PC-9 (cell line): ENCODE measurements at regions of chr2 and their contacts with region 1.

Region 1: DNA sequence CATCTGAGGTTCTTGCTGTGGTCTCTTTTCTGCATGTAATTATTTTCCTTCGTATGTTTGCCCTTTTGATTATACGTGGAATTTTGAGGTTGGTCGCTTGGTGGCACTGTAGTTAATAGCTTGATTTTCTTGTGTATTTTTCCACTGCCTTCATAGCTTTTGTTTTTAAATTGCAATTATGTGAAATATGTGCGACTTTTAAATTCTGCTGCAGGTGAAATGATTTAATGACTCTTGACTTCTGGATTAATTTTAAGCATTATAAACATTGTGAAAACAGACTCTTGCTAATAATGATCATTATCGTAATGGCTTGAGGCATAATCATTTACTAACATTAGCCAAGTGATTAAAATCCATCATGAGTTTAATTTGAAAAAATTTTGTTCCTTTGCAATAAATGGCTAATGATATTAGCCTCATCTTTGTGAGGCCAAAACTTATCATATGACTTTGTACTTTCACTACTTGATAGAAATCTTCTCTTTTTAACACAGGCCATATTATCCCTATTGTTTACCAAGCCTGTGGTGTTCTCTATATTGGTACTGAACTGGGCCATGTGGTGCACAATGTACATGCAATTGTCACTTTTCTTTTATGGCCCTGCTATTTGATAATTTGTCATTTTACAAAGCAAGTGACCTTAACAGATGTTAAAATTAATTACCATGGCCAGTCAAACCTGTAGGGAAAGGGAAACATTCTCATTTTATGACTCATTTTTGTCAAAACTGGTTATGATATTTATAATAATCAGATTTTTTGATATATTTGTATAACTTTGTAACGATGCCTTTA is 62.8 kb upstream of the NEUROD1 start:
- DNase-seq: peak; percentile 50 to 59
- H3K4me3 ChIP-seq: no peak overlapping the region
- H3K27ac ChIP-seq: no peak overlapping the region
- H3K4me1 ChIP-seq: peaks cover 14% of the 10 kb centered on the region
- H3K27me3 ChIP-seq: no peaks in the 10 kb centered on the region
- CTCF ChIP-seq: peak; percentile 95

Region 2: DNA sequence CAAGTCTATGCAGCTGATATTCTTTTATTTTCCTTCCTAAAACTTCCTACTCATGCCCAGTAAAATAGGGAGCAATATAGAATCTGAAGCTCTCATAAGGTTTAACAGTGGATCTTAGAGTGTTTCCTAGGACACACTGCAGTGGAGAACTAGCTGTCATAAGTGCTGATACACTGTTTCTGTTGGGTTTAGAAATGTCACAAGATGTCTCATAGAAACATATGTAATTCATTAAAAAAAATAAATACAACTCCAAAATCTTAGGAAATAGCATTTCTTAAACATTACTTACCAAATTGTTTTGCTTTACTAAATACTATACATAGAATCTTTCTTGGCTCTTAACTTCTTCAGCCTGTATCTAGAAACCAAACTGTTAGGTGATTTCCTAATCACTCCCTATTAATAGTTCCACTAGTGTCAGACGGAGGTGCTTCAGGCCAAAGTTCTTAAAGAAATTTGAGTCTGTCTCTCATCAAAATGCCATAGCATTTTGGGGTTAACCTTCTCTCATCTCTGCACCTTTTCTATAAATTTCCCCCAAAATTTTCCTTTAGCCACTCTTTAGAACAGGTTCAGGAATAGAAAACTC is 179.9 kb before region 1 on chr2:
- CTCF ChIA-PET with region 1: no interaction called
- POLR2A ChIA-PET with region 1: no interaction called
- intact Hi-C with region 1: no loop called
- DNase-seq: no peak
- H3K4me3 ChIP-seq: no peak overlapping the region
- H3K27ac ChIP-seq: no peak overlapping the region
- H3K4me1 ChIP-seq: no peaks in the 10 kb centered on the region
- H3K27me3 ChIP-seq: no peaks in the 10 kb centered on the region
- CTCF ChIP-seq: no peak

Region 3: GRCh38 chr2:181810823-181811695 is 67.9 kb after region 1 on chr2:
- CTCF ChIA-PET with region 1: interaction called, 7 read pairs
- POLR2A ChIA-PET with region 1: no interaction called
- intact Hi-C with region 1: loop called (anchors 2 kb)
- DNase-seq: peak; percentile 81 to 98
- H3K4me3 ChIP-seq: no peak overlapping the region
- H3K27ac ChIP-seq: peak overlapping the region; percentile 74
- H3K4me1 ChIP-seq: peaks cover 32% of the 10 kb centered on the region
- H3K27me3 ChIP-seq: no peaks in the 10 kb centered on the region
- CTCF ChIP-seq: no peak

Region 4: DNA sequence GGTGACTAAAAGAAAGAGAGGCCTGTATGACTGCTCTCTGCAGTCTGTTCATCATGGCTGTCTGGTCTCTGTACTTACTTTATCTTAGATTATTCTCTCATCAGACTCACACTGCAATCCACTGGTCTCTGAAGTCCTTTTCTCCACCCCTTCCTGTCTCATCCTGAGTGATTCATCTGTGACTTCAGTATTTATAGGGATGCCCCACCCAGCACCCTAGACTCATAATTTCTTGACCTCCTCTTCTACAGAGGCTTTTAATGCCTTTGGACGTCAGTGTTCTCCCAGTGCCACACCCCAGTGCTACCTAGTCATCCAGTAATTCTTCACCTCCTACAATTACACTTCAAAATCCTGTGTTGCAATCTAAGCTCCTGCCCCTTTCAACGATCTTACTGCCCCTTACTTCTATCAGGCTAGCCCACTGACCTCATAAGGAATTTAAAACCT is 133.5 kb after region 1 on chr2:
- CTCF ChIA-PET with region 1: no interaction called
- POLR2A ChIA-PET with region 1: no interaction called
- intact Hi-C with region 1: no loop called
- DNase-seq: peak; percentile 54 to 88
- H3K4me3 ChIP-seq: no peak overlapping the region
- H3K27ac ChIP-seq: peak overlapping the region; percentile 49
- H3K4me1 ChIP-seq: peaks cover 20% of the 10 kb centered on the region
- H3K27me3 ChIP-seq: no peaks in the 10 kb centered on the region
- CTCF ChIP-seq: no peak

Region 5: GRCh38 chr2:181904022-181904632 is 161.0 kb after region 1 on chr2:
- CTCF ChIA-PET with region 1: interaction called, 8 read pairs
- POLR2A ChIA-PET with region 1: interaction called, 4 read pairs
- intact Hi-C with region 1: loop called (anchors 1 kb)
- DNase-seq: peak; percentile 15 to 60
- H3K4me3 ChIP-seq: no peak overlapping the region
- H3K27ac ChIP-seq: no peak overlapping the region
- H3K4me1 ChIP-seq: 0 out of 2 replicates have a peak, but pooled peaks cover 9% of the 10 kb centered on the region
- H3K27me3 ChIP-seq: no peaks in the 10 kb centered on the region
- CTCF ChIP-seq: peak; percentile 86

Region 6: DNA sequence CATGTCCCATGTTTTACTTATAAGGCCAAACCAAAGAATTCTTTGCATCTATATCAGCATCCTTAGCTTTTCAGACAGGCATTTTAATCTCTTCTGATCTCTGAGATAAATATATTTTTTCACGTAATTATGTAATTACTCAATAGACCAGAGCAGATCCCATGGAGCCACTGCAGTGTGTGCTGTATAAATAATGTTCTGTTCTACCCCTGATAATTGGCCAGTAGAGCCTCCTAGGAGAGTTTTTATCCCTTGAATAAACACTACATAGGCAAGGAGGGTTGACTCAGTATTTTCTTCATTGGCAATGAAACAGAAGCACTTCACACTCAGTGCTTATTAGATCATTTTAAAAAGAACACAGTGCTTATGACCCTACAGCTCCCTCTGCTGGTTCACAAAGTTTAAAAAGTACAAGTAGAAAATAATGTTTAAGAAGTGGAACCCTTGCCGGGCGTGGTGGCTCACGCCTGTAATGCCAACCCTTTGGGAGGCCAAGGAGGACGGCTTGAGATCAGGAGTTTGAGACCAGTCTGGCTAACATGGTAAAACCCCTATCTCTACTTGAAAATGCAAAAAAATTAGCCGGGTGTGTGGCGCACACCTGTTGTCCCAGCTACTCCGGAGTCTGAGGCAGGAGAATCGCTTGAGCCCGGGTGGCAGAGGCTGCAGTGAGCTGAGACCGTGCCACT is 334.5 kb after region 1 on chr2:
- CTCF ChIA-PET with region 1: interaction called, 7 read pairs
- POLR2A ChIA-PET with region 1: no interaction called
- intact Hi-C with region 1: loop called (anchors 1 kb)
- DNase-seq: peak; percentile 47 to 76
- H3K4me3 ChIP-seq: no peak overlapping the region
- H3K27ac ChIP-seq: no peak overlapping the region
- H3K4me1 ChIP-seq: 0 out of 2 replicates have a peak, but pooled peaks cover 4% of the 10 kb centered on the region
- H3K27me3 ChIP-seq: no peaks in the 10 kb centered on the region
- CTCF ChIP-seq: peak; percentile 98

Region 7: GRCh38 chr2:182186132-182186735 is 443.1 kb after region 1 on chr2:
- CTCF ChIA-PET with region 1: no interaction called
- POLR2A ChIA-PET with region 1: no interaction called
- intact Hi-C with region 1: loop called (anchors 5 kb)
- DNase-seq: peak in 1 of 2 experiments; percentile 56
- H3K4me3 ChIP-seq: no peak overlapping the region
- H3K27ac ChIP-seq: no peak overlapping the region
- H3K4me1 ChIP-seq: no peaks in the 10 kb centered on the region
- H3K27me3 ChIP-seq: no peaks in the 10 kb centered on the region
- CTCF ChIP-seq: peak; percentile 99